A549 (cell line): ENCODE measurements at regions of chr12 and their contacts with region 1.

Region 1: GRCh38 chr12:31682136-31682962 is 22.9 kb downstream of the ETFBKMT start:
- DNase-seq: peak; percentile 63 to 95
- ATAC-seq: peak; percentile 98
- H3K4me3 ChIP-seq: peak overlapping the region; percentile 16; the same call in 1 of the 3 replicates
- H3K27ac ChIP-seq: peak overlapping the region; percentile 46 to 70; a peak in 5 of 6 replicates
- H3K4me1 ChIP-seq: 0 out of 3 replicates have a peak, but pooled peaks cover 6% of the 10 kb centered on the region
- CTCF ChIP-seq: peak; percentile 85
- EP300 ChIP-seq: no peak
- POLR2A ChIP-seq: no peak
- RAD21 ChIP-seq: peak; percentile 98 to 99

Region 2: GRCh38 chr12:31603546-31604009 is 78.8 kb before region 1 on chr12:
- CTCF ChIA-PET with region 1: no interaction called
- POLR2A ChIA-PET with region 1: no interaction called
- DNase-seq: no peak
- ATAC-seq: no peak
- H3K4me3 ChIP-seq: no peak overlapping the region
- H3K27ac ChIP-seq: no peak overlapping the region
- H3K4me1 ChIP-seq: no peaks in the 10 kb centered on the region
- CTCF ChIP-seq: no peak
- EP300 ChIP-seq: no peak
- POLR2A ChIP-seq: no peak
- RAD21 ChIP-seq: no peak

Region 3: GRCh38 chr12:31702047-31702446 is 19.7 kb after region 1 on chr12:
- CTCF ChIA-PET with region 1: interaction called, 10 read pairs
- POLR2A ChIA-PET with region 1: no interaction called
- DNase-seq: peak in 1 of 2 experiments; percentile 60
- ATAC-seq: peak in 1 of 2 experiments; percentile 65; a peak in 4 of 6 replicates
- H3K4me3 ChIP-seq: no peak overlapping the region
- H3K27ac ChIP-seq: no peak overlapping the region
- H3K4me1 ChIP-seq: no peaks in the 10 kb centered on the region
- CTCF ChIP-seq: peak; percentile 22; the same call in 1 of the 3 replicates
- EP300 ChIP-seq: no peak
- POLR2A ChIP-seq: no peak
- RAD21 ChIP-seq: peak; percentile 19 to 38; a peak in 2 of 5 replicates

Region 4: DNA sequence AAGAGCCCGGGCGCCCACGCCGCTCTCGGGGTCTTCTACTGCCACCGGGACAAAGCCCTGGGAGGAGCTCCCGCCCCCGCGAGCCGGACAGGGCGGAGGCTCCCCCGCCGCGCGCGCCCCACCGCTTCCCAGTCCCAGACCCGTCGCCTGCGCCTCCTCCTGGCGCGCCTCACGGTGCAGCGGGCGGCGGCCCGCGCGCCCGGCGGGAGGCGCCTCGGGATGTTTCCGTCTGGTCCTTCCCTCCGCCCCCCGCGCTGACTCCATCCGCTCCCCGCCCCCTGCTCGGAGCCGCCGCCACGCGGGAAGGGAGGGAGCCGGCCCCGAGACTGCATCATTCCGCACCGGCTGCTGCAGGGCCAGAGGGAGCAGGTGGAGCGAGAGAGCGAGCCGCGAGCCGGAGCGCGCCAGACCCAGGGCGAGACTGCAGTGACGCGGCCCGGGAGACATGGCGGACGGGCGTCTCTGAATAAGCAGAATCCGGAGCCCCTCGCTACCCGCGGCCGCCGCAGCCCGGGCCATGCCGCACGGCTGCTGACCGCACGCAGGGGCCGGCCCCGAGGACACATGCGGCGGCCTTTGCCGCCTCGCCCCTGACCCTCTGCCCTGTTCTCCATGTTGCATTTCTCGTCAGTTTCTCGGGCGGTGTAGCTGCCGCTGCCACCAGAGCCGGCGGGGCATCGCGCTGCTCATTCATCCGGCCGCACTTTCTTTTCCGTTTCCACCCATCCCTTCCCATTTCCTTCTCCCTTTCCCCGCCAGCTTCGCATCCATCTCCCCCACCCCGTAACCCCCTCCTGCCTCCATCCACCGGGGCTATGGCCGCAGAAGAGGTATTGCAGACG is 424.4 kb after region 1 on chr12 and contains the start of gene BICD1:
- CTCF ChIA-PET with region 1: interaction called, 12 read pairs
- POLR2A ChIA-PET with region 1: no interaction called
- DNase-seq: peak; percentile 75 to 89
- ATAC-seq: peak; percentile 95 to 96
- H3K4me3 ChIP-seq: peak within 1 kb of the TSS; percentile 94
- H3K27ac ChIP-seq: peak within 1 kb of the TSS; percentile 97 to 98
- H3K4me1 ChIP-seq: peaks cover 28% of the 10 kb centered on the region
- CTCF ChIP-seq: peak; percentile 57
- EP300 ChIP-seq: no peak; a peak in 1 of 5 replicates
- POLR2A ChIP-seq: peak; percentile 91
- RAD21 ChIP-seq: peak; percentile 7 to 62; a peak in 3 of 5 replicates
- polyA plus RNA-seq, gene BICD1: 21.7 and 24.3 TPM in 2 replicates